GM10248 (cell line): ENCODE measurements at regions of chr2 and their contacts with region 1.

Region 1: DNA sequence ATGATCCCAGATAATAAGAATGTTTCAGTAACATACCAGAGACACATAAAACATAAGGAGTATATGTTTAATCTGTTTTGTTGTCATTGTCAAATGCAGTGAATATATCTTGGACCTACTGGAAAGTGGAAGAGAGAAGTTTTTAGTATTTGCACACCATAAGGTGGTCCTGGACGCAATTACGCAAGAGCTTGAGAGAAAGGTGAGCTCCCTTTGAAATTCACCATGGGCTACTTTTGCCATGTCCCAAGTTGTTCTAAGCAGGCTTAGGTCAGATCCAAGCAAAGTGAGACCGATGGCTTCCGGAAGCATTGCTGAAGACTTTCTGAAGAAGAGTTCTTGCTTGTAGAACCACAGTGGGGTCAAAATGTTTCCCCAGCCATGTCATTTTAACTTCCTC is 30.8 kb upstream of the RPL37A start:
- DNase-seq: no peak
- CTCF ChIP-seq: no peak

Region 2: GRCh38 chr2:215657844-215658243 is 810.0 kb before region 1 on chr2:
- CTCF ChIA-PET with region 1: no interaction called
- POLR2A ChIA-PET with region 1: no interaction called
- DNase-seq: no peak
- CTCF ChIP-seq: no peak

Region 3: DNA sequence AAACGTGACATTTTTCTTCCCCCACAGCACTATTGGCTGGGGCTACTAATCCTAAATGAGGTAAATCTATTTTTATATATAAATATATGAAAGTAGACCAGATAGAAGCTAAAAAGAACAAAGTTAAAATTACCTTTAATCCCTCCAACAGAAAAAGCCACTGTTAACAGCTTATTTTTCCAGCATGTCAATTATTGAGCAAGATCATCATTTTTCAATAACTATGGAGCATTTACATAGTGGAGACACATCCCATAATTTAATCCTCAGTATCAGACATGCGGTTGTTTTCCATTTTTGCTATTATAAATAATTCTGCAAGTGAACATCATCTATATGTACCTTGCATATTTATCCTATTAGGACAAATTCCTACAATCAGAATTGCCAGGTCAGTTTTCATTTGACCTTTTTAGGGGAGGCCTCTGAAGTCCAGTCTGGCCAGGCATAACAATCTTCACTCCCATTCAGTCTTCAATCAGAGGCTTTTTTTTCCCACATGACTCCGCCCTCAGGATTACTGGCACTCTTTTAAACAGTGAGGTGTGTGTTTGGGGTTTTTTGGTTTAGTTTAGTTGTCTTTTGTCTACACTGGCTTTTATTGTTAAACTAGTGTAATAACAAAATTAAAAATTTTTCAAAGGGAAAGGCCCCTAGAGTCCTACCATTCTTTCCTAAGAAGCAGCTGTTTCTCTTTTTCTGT is 26.4 kb before region 1 on chr2:
- CTCF ChIA-PET with region 1: no interaction called
- POLR2A ChIA-PET with region 1: no interaction called
- DNase-seq: no peak
- CTCF ChIP-seq: no peak

Region 4: GRCh38 chr2:216478151-216478550 is 10.3 kb after region 1 on chr2:
- CTCF ChIA-PET with region 1: interaction called, 14 read pairs
- POLR2A ChIA-PET with region 1: no interaction called
- DNase-seq: no peak
- CTCF ChIP-seq: no peak